ENCODE measurements at regions of chr17 and their contacts with region 1.

Region 1: GRCh38 chr17:60641810-60642220 is 35.8 kb upstream of the BCAS3 start:
- DNase-seq: peak; percentile 75
- H3K4me3 ChIP-seq: no peak overlapping the region; a peak in 1 of 4 replicates
- H3K27ac ChIP-seq: peak overlapping the region in 1 of 2 experiments; percentile 10; a peak in 1 of 4 replicates
- H3K4me1 ChIP-seq: peaks cover 0 to 3% of the 10 kb centered on the region in 2 experiments; a peak in 2 of 4 replicates
- H3K27me3 ChIP-seq: no peaks in the 10 kb centered on the region
- CTCF ChIP-seq: peak; percentile 68
- EP300 ChIP-seq: no peak
- RAD21 ChIP-seq: peak; percentile 72

Region 2: GRCh38 chr17:60142872-60143499 is 498.8 kb before region 1 on chr17:
- CTCF ChIA-PET with region 1: interaction called, 15 read pairs
- POLR2A ChIA-PET with region 1: no interaction called
- DNase-seq: peak; percentile 84
- H3K4me3 ChIP-seq: peak overlapping the region; percentile 35 to 57; a peak in 3 of 4 replicates
- H3K27ac ChIP-seq: peak overlapping the region in 1 of 2 experiments; percentile 83; a peak in 2 of 4 replicates
- H3K4me1 ChIP-seq: peaks cover 9 to 13% of the 10 kb centered on the region in 2 experiments; a peak in 3 of 4 replicates
- H3K27me3 ChIP-seq: no peaks in the 10 kb centered on the region
- CTCF ChIP-seq: peak; percentile 99
- EP300 ChIP-seq: no peak
- RAD21 ChIP-seq: peak; percentile 94

Region 3: GRCh38 chr17:60301649-60302048 is 340.2 kb before region 1 on chr17:
- CTCF ChIA-PET with region 1: no interaction called
- POLR2A ChIA-PET with region 1: no interaction called
- DNase-seq: no peak
- H3K4me3 ChIP-seq: no peak overlapping the region
- H3K27ac ChIP-seq: no peak overlapping the region
- H3K4me1 ChIP-seq: no peaks in the 10 kb centered on the region; a peak in 1 of 4 replicates
- H3K27me3 ChIP-seq: no peaks in the 10 kb centered on the region
- CTCF ChIP-seq: no peak
- EP300 ChIP-seq: no peak
- RAD21 ChIP-seq: no peak

Region 4: DNA sequence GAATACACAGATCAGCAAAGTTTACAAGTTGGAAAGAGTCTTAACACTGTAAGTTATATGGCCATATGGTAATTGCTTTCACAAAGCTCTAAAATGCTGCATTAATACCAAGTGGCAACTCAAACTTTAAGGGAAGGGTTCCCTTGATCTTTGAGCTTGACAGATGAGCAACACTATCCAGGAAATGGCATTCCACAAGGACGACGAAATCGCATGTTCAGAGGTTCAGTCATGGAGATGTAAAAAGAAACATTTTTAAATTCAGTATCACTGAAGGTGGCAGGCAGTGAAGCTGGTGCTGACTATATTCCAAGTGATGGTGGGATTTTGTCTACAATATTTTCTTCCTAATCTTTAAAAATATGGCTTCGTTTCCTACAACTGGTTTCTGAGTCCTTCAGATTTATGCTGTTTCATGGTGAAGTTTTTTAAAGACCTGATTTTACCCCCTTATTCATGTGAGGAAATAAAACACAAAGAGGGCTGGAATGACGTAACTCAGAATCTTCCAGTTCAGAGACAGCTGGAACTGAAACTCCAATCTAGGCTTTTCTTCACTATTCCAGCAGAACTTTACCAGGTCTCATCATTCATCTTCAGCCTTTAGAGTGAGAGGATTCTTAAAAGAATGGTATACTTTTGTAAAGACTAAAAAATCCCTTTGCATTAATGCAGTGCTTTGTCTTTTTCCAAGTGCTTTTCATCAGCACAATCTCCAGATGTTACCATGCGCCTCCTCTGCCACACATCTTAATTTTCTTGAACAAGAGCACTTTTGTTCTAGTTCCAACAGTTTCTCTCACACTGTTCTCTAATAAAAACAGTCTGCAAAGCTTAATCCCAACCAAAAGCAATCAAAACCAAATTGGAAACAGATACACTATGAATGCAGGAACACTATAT is 199.3 kb before region 1 on chr17:
- CTCF ChIA-PET with region 1: interaction called, 10 read pairs
- POLR2A ChIA-PET with region 1: no interaction called
- DNase-seq: peak; percentile 10
- H3K4me3 ChIP-seq: no peak overlapping the region
- H3K27ac ChIP-seq: peak overlapping the region; percentile 47 to 49
- H3K4me1 ChIP-seq: peaks cover 7 to 23% of the 10 kb centered on the region in 2 experiments; a peak in 3 of 4 replicates
- H3K27me3 ChIP-seq: no peaks in the 10 kb centered on the region
- CTCF ChIP-seq: no peak
- EP300 ChIP-seq: peak; percentile 6 to 65; a peak in 2 of 4 replicates
- RAD21 ChIP-seq: no peak

Region 5: DNA sequence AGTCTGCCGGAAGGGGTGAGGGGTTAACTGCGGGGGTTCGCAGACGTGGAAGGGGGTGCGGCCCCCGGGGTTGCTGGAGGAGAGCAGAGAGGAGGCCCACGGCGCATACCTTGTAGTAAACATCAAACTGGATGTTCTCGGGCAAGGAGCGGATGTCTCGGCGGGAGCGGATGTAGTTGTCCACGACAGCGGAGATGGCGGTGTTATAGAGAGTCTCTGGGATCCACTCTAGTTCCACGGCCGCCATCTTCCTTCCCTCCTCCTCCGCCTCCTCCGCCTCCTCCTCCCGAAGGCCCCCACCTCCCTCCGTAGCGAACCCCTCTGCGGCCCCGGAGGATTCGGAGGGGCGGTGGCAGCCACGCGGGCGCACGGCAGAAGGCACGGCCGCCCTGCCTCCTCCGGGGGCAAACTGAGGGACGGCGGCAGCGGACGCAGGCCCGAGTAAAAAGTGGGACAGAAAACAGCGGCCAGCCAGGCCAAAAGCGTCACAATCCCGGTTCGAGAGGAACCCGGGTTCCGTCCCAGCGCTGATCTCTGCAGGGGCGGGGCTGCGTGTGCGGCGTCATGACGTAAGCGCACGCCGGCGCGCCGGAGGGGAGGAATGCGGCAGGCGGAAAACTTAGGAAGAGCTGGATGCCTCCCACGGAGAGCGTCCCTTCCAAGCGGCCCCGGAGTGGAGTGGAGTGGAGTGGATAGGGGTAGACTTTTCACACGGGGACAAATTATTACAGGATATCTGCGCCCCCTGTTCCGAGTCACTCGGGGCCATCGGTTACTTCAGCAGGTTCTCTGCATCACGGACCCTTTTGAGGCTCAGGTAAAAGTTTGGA is 115.9 kb before region 1 on chr17 and contains the start of gene APPBP2:
- CTCF ChIA-PET with region 1: interaction called, 12 read pairs
- POLR2A ChIA-PET with region 1: no interaction called
- DNase-seq: peak; percentile 95
- H3K4me3 ChIP-seq: peak within 1 kb of the TSS; percentile 90 to 93
- H3K27ac ChIP-seq: peak within 1 kb of the TSS; percentile 97 to 99
- H3K4me1 ChIP-seq: peaks cover 0 to 14% of the 10 kb centered on the region in 2 experiments; a peak in 2 of 4 replicates
- H3K27me3 ChIP-seq: no peaks in the 10 kb centered on the region
- CTCF ChIP-seq: no peak
- EP300 ChIP-seq: no peak
- RAD21 ChIP-seq: no peak; the same call in 1 of the 2 replicates
- polyA plus RNA-seq, gene APPBP2: 7.6 and 12.5 TPM in 2 replicates

Region 6: GRCh38 chr17:60577147-60577915 is 64.5 kb before region 1 on chr17:
- CTCF ChIA-PET with region 1: interaction called, 31 read pairs
- POLR2A ChIA-PET with region 1: no interaction called
- DNase-seq: peak; percentile 33
- H3K4me3 ChIP-seq: no peak overlapping the region; a peak in 1 of 4 replicates
- H3K27ac ChIP-seq: peak overlapping the region in 1 of 2 experiments; percentile 25; a peak in 1 of 4 replicates
- H3K4me1 ChIP-seq: peaks cover 2 to 6% of the 10 kb centered on the region in 2 experiments; a peak in 2 of 4 replicates
- H3K27me3 ChIP-seq: no peaks in the 10 kb centered on the region
- CTCF ChIP-seq: peak; percentile 40
- EP300 ChIP-seq: no peak
- RAD21 ChIP-seq: peak; percentile 52

Region 7: DNA sequence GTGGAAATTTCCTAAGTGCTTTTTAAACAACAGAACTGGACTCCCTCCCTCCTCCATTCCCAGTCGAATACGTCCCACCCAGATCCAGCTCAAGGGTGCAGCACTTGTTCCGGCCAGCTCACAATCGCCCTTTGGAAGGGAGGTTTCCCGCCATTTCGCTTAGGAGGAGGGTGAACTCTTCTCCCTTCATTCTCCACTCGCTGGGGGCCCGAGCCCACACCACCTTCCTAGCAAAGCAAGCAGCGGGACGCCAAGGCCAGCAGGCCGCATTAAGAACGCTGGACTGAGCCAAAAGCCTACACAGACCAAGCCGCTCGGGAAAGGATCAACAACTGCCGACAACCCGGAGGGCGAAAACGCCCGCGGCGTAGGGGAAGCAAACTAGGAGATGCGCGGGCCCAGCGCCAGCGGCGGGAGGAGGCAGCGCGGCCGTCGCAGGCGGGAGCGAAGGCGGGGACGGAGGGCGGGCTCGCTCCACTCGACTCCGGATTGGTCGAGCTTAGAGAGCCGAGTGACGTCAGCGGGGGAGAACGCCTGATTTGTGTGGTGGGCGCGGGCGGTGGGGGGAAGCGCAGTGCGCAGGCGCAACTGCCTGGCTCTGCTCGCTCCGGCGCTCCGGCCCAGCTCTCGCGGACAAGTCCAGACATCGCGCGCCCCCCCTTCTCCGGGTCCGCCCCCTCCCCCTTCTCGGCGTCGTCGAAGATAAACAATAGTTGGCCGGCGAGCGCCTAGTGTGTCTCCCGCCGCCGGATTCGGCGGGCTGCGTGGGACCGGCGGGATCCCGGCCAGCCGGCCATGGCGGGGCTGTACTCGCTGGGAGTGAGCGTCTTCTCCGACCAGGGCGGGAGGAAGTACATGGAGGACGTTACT is 42.0 kb before region 1 on chr17 and contains the start of gene PPM1D:
- CTCF ChIA-PET with region 1: interaction called, 68 read pairs
- POLR2A ChIA-PET with region 1: interaction called, 3 read pairs
- DNase-seq: peak; percentile 100
- H3K4me3 ChIP-seq: peak within 1 kb of the TSS; percentile 78 to 97
- H3K27ac ChIP-seq: peak within 1 kb of the TSS; percentile 92 to 94
- H3K4me1 ChIP-seq: peaks cover 3 to 11% of the 10 kb centered on the region in 2 experiments
- H3K27me3 ChIP-seq: no peaks in the 10 kb centered on the region
- CTCF ChIP-seq: no peak
- EP300 ChIP-seq: peak; percentile 7 to 46; a peak in 2 of 4 replicates
- RAD21 ChIP-seq: no peak
- polyA plus RNA-seq, gene PPM1D: 8.4 and 8.8 TPM in 2 replicates

Region 8: DNA sequence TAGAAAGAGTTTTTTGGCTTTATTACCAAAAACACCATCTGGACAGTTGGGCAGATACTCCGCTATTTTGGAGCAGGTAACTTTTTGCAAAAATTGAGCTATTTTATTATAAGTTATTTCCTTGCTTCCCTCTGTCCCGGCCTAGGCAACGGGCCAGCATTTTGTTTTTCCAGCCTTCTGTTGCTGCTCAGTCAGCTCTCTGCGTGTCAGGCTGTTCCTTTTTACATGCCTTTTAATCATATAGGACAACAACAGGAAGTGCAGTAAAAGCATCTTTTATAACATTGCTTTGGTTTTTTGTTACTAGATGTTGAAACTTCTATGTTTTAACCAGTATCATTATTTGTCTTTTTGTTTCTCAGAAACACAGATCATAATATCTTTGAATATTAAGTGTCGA is 11.5 kb before region 1 on chr17:
- CTCF ChIA-PET with region 1: interaction called, 103 read pairs
- POLR2A ChIA-PET with region 1: interaction called, 3 read pairs
- DNase-seq: no peak
- H3K4me3 ChIP-seq: no peak overlapping the region
- H3K27ac ChIP-seq: no peak overlapping the region; a peak in 1 of 4 replicates
- H3K4me1 ChIP-seq: no peaks in the 10 kb centered on the region
- H3K27me3 ChIP-seq: no peaks in the 10 kb centered on the region
- CTCF ChIP-seq: no peak
- EP300 ChIP-seq: no peak
- RAD21 ChIP-seq: no peak

Region 9: GRCh38 chr17:60851181-60851580 is 209.4 kb after region 1 on chr17:
- CTCF ChIA-PET with region 1: no interaction called
- POLR2A ChIA-PET with region 1: no interaction called
- DNase-seq: peak; percentile 11
- H3K4me3 ChIP-seq: no peak overlapping the region
- H3K27ac ChIP-seq: no peak overlapping the region
- H3K4me1 ChIP-seq: no peaks in the 10 kb centered on the region
- H3K27me3 ChIP-seq: no peaks in the 10 kb centered on the region
- CTCF ChIP-seq: no peak
- EP300 ChIP-seq: no peak
- RAD21 ChIP-seq: no peak